ENCODE measurements at regions of chr1 and their contacts with region 1.

Region 1: DNA sequence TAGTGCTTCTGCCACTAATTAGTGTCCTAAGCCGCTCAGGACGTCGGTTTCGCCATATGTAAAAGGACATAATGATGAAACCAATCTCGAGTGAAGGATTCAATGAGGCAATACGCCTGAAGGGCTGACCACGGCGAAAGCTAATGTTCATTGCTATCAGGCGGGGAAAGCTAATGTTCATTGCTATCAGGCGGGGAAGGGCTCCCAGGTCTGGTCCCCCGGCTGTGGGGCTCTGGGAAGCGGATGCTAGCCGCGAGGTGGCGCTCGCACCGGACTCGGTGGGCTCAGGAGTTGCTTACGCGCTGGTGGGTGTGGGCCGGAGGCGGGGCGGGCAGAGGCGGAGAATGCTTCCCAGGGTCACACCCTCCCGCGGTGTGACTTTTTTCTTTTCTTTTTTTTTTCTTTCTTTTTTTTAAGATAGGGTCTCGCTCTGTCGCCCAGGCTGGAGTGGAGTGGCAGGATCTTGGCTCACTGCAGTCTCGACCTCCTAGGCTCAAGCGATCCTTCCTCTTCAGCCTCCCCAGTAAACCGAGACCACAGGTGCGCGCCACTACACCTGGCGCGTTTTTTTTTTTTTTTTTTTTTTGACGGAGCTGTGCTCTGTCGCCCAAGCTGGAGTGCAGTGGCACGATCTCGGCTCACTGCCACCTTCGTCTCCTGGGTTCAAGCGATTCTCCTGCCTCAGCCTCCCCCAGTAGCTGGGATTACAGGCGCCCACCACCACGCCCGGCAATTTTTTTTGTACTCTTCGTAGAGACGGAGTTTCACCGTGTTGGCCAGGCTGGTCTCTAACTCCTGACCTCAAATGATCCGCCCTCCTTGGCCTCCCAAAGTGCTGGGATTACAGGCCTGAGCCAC is 1.1 kb upstream of the PEAR1 start:
- DNase-seq: peak; percentile 94 to 98
- ATAC-seq: peak; percentile 92
- H3K4me3 ChIP-seq: no peak overlapping the region
- H3K27ac ChIP-seq: no peak overlapping the region
- H3K4me1 ChIP-seq: no peaks in the 10 kb centered on the region
- H3K27me3 ChIP-seq: no peaks in the 10 kb centered on the region

Region 2: DNA sequence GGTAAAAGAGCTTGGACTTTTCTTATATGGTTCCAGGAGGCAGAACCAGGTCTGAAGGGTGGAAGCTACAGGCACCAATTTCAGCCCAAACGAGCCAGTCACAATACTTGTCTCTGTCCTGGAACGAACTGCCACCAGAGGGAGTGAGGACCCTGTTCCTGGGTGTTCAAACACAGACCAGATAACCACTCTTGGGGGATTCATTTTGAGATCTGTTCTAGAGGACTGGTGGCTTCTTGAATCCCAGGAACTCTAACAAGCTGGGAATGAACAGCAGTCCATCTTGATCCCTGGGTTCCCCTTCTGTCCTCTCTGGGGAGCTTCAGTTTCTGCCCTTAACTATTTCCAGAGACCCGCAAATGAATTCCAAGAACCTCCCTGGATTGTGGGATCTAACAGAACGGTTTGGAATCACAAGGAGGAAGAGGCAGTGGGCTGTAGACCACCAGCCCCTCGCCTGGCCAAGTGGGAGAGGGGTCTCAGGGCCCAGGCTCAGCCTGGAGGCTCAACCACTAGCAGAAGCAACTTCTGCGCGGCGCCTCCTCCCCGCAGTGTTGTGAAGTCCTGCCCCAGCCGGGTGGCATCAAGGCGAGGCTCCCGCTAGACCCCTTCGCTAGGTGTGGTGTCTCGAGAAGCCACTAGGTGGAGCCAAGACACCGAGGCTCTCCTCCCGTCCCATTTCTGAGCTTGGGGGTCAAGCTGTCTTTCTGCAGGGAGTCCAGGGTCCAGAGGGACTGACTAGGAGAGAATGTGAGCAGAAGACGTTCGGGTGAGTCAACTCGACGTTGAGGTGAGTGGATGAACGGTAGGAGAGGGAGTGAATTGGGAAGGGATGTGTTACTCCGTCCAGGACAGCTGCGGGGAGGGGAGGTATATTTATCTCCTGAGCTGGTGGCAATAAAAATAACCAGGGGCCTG is 203.1 kb before region 1 on chr1:
- intact Hi-C with region 1: loop called (anchors 5 to 10 kb)
- DNase-seq: peak; percentile 86 to 91
- ATAC-seq: peak; percentile 93
- H3K4me3 ChIP-seq: no peak overlapping the region
- H3K27ac ChIP-seq: no peak overlapping the region
- H3K4me1 ChIP-seq: no peaks in the 10 kb centered on the region
- H3K27me3 ChIP-seq: no peaks in the 10 kb centered on the region

Region 3: DNA sequence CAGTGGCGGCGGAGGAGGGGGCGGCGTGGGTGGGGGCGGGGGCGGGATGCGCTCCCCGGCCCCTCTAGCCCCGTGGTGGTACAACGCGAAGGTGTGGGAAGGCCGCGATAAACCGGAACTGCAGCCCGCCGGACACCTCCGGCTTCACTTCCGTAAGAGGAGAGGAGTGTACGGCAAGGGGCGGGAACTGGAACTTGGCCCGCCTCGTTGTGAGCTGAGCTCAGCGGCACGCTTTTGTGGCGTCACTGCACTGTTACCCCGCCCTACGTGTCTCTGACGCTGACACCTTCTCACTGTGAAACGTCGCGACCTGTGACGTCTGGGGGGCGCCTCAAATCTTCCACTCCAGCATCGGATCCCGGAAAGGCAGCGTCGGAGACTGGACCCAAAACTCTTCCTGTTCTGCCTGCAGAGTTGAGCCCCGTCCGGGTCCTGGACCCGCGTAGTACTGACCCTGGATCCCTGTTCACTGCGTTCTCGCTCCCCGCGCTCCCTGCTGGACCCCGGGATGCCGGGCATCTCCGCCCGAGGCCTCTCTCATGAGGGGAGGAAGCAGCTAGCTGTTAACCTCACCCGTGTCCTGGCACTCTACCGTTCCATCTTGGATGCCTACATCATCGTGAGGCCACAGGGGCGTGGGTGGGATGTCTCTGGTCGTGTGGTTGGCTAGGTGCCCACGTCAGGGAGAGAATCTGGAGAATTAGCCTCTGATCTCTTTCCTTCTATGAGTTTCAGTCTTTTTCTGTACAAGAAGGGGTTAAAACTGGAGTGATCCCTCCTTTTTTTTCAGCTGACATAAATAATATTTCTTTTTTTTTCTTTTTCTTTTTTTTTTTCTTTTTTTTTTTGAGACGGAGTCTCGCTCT is 163.6 kb before region 1 on chr1 and contains the start of gene ISG20L2:
- intact Hi-C with region 1: loop called in 1 of 2 experiments (anchors 5 kb)
- DNase-seq: peak; percentile 98
- ATAC-seq: peak; percentile 97
- H3K4me3 ChIP-seq: peak within 1 kb of the TSS; percentile 83 to 89
- H3K27ac ChIP-seq: peak within 1 kb of the TSS; percentile 16 to 94
- H3K4me1 ChIP-seq: peaks cover 0 to 2% of the 10 kb centered on the region in 2 donors
- H3K27me3 ChIP-seq: no peaks in the 10 kb centered on the region
- total RNA-seq, gene ISG20L2: 20.6 to 26.9 TPM

Region 4: DNA sequence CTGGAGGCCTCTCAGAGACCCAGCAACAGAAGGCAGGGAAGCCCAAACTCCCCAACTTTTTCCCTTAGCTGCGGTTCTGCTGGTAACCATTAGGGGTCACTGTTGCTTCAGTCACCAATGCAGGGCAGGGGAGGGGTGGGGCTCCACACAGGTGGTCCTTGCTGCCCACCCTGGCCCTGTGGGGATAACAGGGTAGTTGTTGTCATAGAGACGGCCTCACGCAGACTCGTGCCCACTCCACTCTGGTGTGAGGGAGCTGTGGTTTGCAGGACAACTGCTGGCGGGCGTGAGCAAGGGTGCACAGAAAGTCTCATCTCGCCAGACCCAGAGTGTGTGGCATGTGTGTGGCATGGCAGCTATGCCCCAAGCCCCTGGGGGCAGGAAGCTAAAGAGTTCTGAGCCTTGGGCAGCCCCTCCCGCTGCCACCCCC is 53.4 kb before region 1 on chr1:
- intact Hi-C with region 1: loop called (anchors 1 to 5 kb)
- DNase-seq: no peak
- ATAC-seq: no peak
- H3K4me3 ChIP-seq: no peak overlapping the region
- H3K27ac ChIP-seq: no peak overlapping the region
- H3K4me1 ChIP-seq: no peaks in the 10 kb centered on the region
- H3K27me3 ChIP-seq: no peaks in the 10 kb centered on the region

Region 5: GRCh38 chr1:156927215-156928042 is 35.0 kb after region 1 on chr1:
- intact Hi-C with region 1: loop called in 1 of 2 experiments (anchors 5 kb)
- DNase-seq: peak; percentile 82 to 91
- ATAC-seq: peak; percentile 53
- H3K4me3 ChIP-seq: no peak overlapping the region
- H3K27ac ChIP-seq: no peak overlapping the region
- H3K4me1 ChIP-seq: no peaks in the 10 kb centered on the region
- H3K27me3 ChIP-seq: peaks cover 0 to 2% of the 10 kb centered on the region in 2 donors

Region 6: DNA sequence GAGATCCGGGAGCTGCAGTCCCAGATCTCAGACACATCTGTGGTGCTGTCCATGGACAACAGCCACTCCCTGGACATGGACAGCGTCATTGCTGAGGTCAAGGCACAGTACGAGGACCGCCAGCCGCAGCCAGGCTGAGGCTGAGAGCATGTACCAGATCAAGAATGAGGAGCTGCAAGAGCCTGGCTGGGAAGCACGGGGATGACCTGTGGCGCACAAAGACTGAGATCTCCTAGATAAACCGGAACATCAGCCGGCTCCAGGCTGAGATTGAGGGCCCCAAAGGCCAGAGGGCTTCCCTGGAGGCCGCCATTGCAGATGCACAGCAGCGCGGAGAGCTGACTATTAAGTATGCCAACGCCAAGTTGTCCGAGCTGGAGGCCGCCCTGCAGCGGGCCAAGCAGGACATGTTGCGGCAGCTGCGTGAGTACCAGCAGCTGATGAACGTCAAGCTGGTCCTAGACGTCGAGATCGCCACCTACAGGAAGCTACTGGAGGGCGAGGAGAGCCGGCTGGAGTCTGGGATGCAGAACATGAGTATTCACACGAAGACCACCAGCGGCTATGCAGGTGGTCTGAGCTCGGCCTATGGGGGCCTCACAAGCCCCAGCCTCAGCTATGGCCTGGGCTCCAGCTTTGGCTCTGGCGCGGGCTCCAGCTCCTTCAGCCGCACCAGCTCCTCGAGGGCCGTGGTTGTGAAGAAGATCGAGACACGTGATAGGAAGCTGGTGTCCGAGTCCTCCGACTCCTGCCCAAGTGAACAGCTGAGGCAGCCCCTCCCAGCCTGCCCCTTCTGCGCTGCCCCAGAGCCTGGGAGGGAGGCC is 181.7 kb after region 1 on chr1:
- intact Hi-C with region 1: loop called in 1 of 2 experiments (anchors 10 kb)
- DNase-seq: peak; percentile 83 to 89
- ATAC-seq: no peak
- H3K4me3 ChIP-seq: no peak overlapping the region
- H3K27ac ChIP-seq: no peak overlapping the region
- H3K4me1 ChIP-seq: no peaks in the 10 kb centered on the region
- H3K27me3 ChIP-seq: no peaks in the 10 kb centered on the region

Region 7: GRCh38 chr1:157170677-157171515 is 278.5 kb after region 1 on chr1:
- intact Hi-C with region 1: no loop called
- DNase-seq: no peak
- ATAC-seq: no peak
- H3K4me3 ChIP-seq: no peak overlapping the region
- H3K27ac ChIP-seq: no peak overlapping the region
- H3K4me1 ChIP-seq: no peaks in the 10 kb centered on the region
- H3K27me3 ChIP-seq: no peaks in the 10 kb centered on the region